Ovary (tissue), 10 donors: ENCODE measurements at regions of chr12 and their contacts with region 1.

Region 1: GRCh38 chr12:24045816-24046257 is 96.4 kb upstream of the SOX5 start:
- DNase-seq: no peak
- H3K4me3 ChIP-seq: no peak overlapping the region
- H3K27ac ChIP-seq: no peak overlapping the region
- H3K4me1 ChIP-seq: no peaks in the 10 kb centered on the region
- H3K27me3 ChIP-seq: no peaks in the 10 kb centered on the region
- CTCF ChIP-seq: no peak
- EP300 ChIP-seq: no peak
- POLR2A ChIP-seq: no peak

Region 2: GRCh38 chr12:24360907-24361306 is 315.1 kb after region 1 on chr12:
- intact Hi-C with region 1: loop called in 1 of 4 experiments (anchors 5 kb)
- DNase-seq: no peak
- H3K4me3 ChIP-seq: no peak overlapping the region
- H3K27ac ChIP-seq: no peak overlapping the region
- H3K4me1 ChIP-seq: peaks cover 1% of the 10 kb centered on the region
- H3K27me3 ChIP-seq: no peaks in the 10 kb centered on the region
- CTCF ChIP-seq: no peak
- EP300 ChIP-seq: no peak
- POLR2A ChIP-seq: no peak